ENCODE measurements at regions of chr10 and their contacts with region 1.

Region 1: GRCh38 chr10:22597138-22597537 is 117.2 kb downstream of the PIP4K2A start:
- DNase-seq: peak; percentile 55
- ATAC-seq: peak; percentile 60
- H3K4me3 ChIP-seq: no peak overlapping the region
- H3K27ac ChIP-seq: peak overlapping the region; percentile 68
- H3K4me1 ChIP-seq: peaks cover 49% of the 10 kb centered on the region
- H3K27me3 ChIP-seq: no peaks in the 10 kb centered on the region
- CTCF ChIP-seq: no peak
- EP300 ChIP-seq: no peak
- POLR2A ChIP-seq: peak; percentile 43; the same call in 1 of the 2 replicates
- RAD21 ChIP-seq: no peak

Region 2: GRCh38 chr10:22573820-22574569 is 23.1 kb before region 1 on chr10:
- CTCF ChIA-PET with region 1: interaction called, 11 read pairs
- POLR2A ChIA-PET with region 1: no interaction called
- RAD21 ChIA-PET with region 1: interaction called, 12 read pairs
- SMC1A ChIA-PET with region 1: interaction called, 5 read pairs
- in situ Hi-C with region 1: no loop called
- intact Hi-C with region 1: no loop called
- DNase-seq: no peak
- ATAC-seq: peak; percentile 76
- H3K4me3 ChIP-seq: no peak overlapping the region
- H3K27ac ChIP-seq: 0 out of 2 replicates have a peak overlapping the region, but pooled peaks have one; percentile 49
- H3K4me1 ChIP-seq: 0 out of 2 replicates have a peak, but pooled peaks cover 2% of the 10 kb centered on the region
- H3K27me3 ChIP-seq: no peaks in the 10 kb centered on the region
- CTCF ChIP-seq: peak; percentile 57 to 66 (median 63)
- EP300 ChIP-seq: no peak
- POLR2A ChIP-seq: no peak
- RAD21 ChIP-seq: peak; percentile 84

Region 3: GRCh38 chr10:22615819-22616499 is 18.8 kb after region 1 on chr10:
- CTCF ChIA-PET with region 1: interaction called, 5 read pairs
- POLR2A ChIA-PET with region 1: interaction called, 8 read pairs
- RAD21 ChIA-PET with region 1: interaction called, 10 read pairs
- SMC1A ChIA-PET with region 1: interaction called, 25 read pairs
- in situ Hi-C with region 1: no loop called
- intact Hi-C with region 1: no loop called
- DNase-seq: peak; percentile 35
- ATAC-seq: peak; percentile 91
- H3K4me3 ChIP-seq: peak overlapping the region; percentile 54; the same call in 1 of the 2 replicates
- H3K27ac ChIP-seq: peak overlapping the region; percentile 73
- H3K4me1 ChIP-seq: peaks cover 57% of the 10 kb centered on the region
- H3K27me3 ChIP-seq: no peaks in the 10 kb centered on the region
- CTCF ChIP-seq: no peak
- EP300 ChIP-seq: no peak
- POLR2A ChIP-seq: peak; percentile 67
- RAD21 ChIP-seq: no peak

Region 4: GRCh38 chr10:22624289-22624738 is 27.2 kb after region 1 on chr10:
- CTCF ChIA-PET with region 1: interaction called, 5 read pairs
- POLR2A ChIA-PET with region 1: interaction called, 10 read pairs
- RAD21 ChIA-PET with region 1: interaction called, 22 read pairs
- SMC1A ChIA-PET with region 1: interaction called, 51 read pairs
- in situ Hi-C with region 1: no loop called
- intact Hi-C with region 1: no loop called
- DNase-seq: no peak
- ATAC-seq: no peak
- H3K4me3 ChIP-seq: no peak overlapping the region
- H3K27ac ChIP-seq: no peak overlapping the region
- H3K4me1 ChIP-seq: peaks cover 34% of the 10 kb centered on the region
- H3K27me3 ChIP-seq: no peaks in the 10 kb centered on the region
- CTCF ChIP-seq: no peak
- EP300 ChIP-seq: no peak
- POLR2A ChIP-seq: no peak
- RAD21 ChIP-seq: no peak

Region 5: DNA sequence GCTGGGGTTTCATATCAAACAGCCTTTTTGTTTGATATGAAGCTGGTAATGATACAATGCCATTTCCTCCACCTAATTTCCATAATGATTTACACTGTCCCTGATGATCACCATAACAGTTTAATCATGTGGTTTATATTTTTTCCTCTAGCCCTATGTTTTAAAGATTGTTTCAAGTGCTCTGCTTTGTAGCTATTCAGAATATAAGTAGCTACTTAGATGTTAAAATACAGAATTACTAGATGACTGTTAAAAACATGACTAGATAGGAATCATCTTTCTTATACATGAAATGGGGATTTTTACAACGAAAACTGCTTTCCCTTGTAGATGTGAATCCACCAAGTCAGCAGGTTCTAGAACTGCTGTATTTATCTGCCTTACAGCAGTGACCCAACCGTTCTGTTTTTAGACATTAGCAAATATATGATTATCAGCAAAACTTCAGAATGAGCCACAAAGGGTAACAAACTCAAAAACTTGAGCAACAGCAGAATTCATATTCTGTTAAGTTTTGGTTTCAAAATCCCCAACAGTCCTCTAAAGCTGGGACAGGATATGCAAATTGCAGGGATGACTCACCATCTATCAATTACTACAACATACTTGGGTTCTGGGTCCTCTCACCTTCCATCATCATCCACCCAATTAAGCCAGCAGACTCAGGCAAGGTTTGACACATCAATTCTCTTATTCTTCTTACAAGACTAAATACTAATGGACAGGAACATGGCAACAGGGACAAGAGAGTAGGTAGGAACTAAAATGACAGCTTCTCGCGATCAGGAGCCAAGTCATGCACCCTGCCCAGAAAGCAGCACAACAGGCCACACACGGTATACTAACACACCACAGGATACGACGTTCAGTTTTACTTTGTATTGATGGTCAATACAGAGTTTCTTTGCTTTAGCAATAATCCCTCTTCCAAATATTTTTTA is 33.4 kb after region 1 on chr10:
- CTCF ChIA-PET with region 1: interaction called, 5 read pairs
- POLR2A ChIA-PET with region 1: interaction called, 8 read pairs
- RAD21 ChIA-PET with region 1: interaction called, 22 read pairs
- SMC1A ChIA-PET with region 1: interaction called, 51 read pairs
- in situ Hi-C with region 1: no loop called
- intact Hi-C with region 1: loop called (anchors 5 kb)
- DNase-seq: peak; percentile 92
- ATAC-seq: peak; percentile 89
- H3K4me3 ChIP-seq: peak overlapping the region; percentile 57
- H3K27ac ChIP-seq: peak overlapping the region; percentile 89
- H3K4me1 ChIP-seq: peaks cover 42% of the 10 kb centered on the region
- H3K27me3 ChIP-seq: no peaks in the 10 kb centered on the region
- CTCF ChIP-seq: no peak
- EP300 ChIP-seq: peak; percentile 70; a peak in 3 of 4 replicates
- POLR2A ChIP-seq: no peak
- RAD21 ChIP-seq: 0 out of 2 replicates have a peak, but pooled peaks have one; percentile 13

Region 6: DNA sequence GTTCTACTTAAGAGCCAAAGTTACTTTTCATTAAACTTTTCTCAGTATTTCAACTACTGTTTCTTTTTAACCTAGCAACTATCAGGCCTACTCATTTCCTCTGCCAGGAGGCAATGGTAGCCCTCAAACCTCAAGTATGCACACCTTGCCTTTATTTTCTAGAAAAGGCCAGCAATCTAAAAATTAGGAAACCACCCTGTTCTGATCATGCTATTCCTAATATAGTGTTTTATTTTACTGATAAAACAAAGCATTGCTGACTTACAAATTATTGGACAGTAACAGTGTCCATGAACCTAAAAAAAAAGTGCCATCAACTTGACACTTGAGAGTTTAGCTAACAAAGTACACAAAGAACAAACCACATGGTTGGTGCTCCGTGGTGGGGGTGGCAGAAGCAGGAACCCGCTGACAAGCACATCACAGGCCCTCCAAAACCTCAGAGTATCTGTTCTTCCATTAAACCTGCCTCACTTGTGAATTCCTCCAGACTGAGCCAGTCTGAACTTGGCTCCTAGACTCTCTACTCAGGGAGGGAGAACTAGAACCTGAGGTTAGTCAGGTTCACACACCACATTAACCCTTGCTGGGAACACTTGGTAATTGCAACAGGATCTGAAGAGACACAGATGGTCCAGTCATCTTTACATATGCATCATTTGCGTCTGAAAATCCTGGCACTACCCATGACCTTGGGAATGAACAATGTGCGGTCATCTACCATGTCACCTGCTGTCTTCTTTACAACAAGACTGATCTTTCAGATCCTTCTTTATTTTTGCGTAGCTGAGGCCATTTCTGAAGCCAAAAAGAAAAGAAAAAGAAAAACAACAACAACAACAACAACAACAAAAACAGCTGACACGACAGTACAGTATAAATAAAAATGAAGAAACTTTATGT is 85.3 kb after region 1 on chr10:
- CTCF ChIA-PET with region 1: interaction called, 4 read pairs
- POLR2A ChIA-PET with region 1: interaction called, 4 read pairs
- RAD21 ChIA-PET with region 1: interaction called, 3 read pairs
- SMC1A ChIA-PET with region 1: interaction called, 24 read pairs
- in situ Hi-C with region 1: no loop called
- intact Hi-C with region 1: no loop called
- DNase-seq: peak; percentile 52
- ATAC-seq: peak; percentile 64
- H3K4me3 ChIP-seq: peak overlapping the region; percentile 45; the same call in 1 of the 2 replicates
- H3K27ac ChIP-seq: peak overlapping the region; percentile 82
- H3K4me1 ChIP-seq: peaks cover 43% of the 10 kb centered on the region
- H3K27me3 ChIP-seq: no peaks in the 10 kb centered on the region
- CTCF ChIP-seq: no peak
- EP300 ChIP-seq: no peak
- POLR2A ChIP-seq: no peak
- RAD21 ChIP-seq: no peak

Measured in GM12878 (cell line).